Dendritic cell treated with granulocyte-macrophage colony-stimulating factor and Interleukin-4, amounts not matched to agents 40 ng/mL and 50 ng/mL, for 4 days (primary cell): ENCODE measurements at regions of chr2 and their contacts with region 1.

Region 1: DNA sequence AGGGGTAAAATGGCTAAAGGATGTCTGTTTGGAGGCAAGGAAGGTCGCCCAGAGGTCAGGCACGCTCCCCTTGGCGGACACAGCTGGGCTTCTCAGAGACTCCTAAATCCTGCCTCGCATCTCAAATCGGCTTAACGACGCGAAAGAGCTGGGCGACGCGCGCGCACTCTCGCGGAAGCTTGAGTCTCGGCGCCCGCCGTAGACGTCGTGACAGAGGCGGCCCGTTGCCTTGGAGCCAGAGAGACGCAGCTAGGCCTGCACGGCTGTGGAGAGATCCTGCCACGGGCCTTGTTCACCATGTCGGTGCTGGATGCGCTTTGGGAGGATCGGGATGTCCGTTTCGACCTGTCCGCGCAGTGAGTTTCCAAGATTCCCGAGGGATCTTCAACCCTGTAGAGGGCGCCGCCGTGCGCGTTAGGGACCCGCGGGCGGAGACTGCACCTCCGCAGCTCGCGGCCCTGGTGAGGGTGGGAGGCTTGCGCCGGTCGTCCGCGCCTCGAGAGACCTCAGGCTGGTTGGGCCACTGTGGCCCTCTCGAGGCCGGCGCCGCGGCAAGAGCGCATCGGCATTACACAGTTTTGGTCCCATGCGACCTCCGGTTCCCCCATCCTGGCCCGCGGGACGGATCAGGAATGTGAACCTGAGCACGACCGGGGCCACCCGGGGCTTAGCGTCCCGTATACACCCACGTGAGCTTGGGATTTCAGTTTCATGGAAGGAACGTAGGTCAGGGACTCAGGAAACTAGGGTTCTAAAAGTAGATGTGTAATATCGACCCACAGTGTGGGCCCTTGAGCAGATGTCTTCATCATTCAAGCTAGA is at the start of gene BBS5:
- H3K4me3 Mint-ChIP-seq: peak within 1 kb of the TSS; percentile 83
- H3K27ac Mint-ChIP-seq: peak within 1 kb of the TSS; percentile 87
- H3K4me1 Mint-ChIP-seq: peaks cover 27% of the 10 kb centered on the region
- H3K27me3 Mint-ChIP-seq: peaks cover 2% of the 10 kb centered on the region

Region 2: DNA sequence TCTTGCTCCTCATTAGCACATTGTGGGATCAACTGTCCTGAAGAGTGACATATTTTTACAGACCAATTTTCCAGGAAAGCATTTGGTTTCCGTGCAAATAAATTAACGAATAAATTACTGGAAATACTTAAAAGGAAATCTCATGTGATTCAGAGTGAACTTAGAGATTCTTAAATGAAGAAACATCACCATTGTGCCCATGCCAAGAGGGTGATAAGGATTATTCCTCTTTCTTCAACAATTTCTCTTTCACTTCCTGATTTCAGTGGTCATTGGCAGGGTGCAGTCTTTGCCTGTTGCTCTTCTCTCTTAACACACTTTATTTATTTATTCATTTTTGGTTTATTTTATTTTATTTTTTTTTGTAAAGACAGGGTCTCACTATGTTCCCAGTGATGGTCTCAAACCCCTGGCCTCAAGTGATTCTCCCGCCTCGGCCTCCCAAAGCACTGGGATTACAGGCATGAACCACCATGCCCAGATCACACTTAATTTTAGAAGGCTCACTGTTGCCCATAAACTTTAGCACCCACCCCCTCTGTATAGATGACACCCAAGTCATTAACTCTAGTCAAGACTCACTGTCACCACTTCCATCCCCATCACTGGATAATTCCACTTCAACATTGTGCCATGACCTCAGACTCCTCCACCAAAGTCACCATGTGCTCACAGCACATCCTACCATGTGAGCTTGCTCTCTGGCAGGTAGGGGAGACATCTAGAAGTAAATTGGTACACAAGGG is 1115.9 kb before region 1 on chr2:
- intact Hi-C with region 1: loop called (anchors 10 kb)
- H3K4me3 Mint-ChIP-seq: no peak overlapping the region
- H3K27ac Mint-ChIP-seq: no peak overlapping the region
- H3K4me1 Mint-ChIP-seq: peaks cover 37% of the 10 kb centered on the region
- H3K27me3 Mint-ChIP-seq: no peaks in the 10 kb centered on the region

Region 3: DNA sequence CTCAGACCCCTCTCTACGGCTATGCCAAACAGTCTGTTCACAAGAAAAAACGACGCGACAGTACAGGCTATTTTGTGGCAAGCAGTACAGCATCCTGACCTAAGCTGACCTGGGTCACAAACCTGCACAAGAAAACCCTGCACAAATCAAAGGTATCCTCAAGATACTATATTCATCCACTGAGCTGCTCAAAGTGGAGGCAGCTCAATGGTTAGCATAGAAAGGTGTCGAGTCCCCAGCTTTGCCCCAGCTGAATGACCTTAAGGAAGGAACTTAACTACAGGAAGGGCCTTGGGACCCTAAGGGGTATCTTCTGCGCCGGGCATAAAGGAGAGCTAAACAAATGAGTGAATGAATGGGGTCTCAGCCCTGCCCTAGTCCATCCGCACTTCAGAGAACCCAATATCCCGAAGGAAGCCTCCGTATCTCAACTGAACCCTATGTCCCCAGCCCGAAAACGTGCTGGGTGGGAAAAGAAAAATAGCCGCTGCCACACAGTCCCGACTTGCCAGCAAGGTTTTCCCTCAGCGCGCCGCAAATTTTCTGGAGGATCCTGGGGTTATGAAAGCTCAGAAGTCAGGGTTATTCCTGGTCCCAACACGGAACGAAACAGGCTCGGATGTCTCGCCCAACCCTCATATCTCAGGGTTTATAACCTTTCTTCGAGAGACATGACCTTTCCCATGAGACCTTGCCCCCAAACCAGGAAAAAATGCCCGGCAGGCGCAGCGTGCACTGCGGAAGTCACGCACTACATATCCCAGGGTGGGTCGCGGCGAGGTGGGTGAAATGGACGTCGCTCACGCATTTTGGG is 93.9 kb after region 1 on chr2 and contains the start of gene FASTKD1:
- intact Hi-C with region 1: loop called (anchors 2 kb)
- H3K4me3 Mint-ChIP-seq: peak within 1 kb of the TSS; percentile 92
- H3K27ac Mint-ChIP-seq: peak within 1 kb of the TSS; percentile 90
- H3K4me1 Mint-ChIP-seq: peaks cover 20% of the 10 kb centered on the region
- H3K27me3 Mint-ChIP-seq: peaks cover 4% of the 10 kb centered on the region